Activated CD8-positive, alpha-beta T cell treated with anti-CD3 and anti-CD28 coated beads for 36 hours (primary cell): ENCODE measurements at regions of chrX and their contacts with region 1.

Region 1: DNA sequence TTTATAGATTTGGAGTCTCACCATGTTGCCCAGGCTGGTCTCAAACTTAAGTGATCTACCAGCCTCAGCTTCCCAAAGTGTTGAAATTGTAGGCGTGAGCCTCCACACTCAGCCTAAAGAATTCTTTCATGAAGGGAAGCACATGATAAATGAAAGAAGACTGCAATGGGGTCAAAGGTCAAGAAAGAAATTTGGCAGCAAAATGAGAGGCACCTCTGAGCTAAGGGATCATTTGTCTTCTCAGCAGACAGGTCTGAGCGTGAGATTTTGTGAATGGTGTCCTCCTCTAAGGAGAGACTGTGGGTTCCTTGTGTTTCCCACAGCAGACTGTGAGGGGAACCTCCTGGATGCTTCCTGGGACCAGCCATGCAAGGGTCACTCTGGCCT is 57.5 kb upstream of the EGFL6 start:
- DNase-seq: no peak
- ATAC-seq: no peak
- H3K4me3 Mint-ChIP-seq: no peak overlapping the region
- H3K27ac Mint-ChIP-seq: no peak overlapping the region
- H3K4me1 Mint-ChIP-seq: no peaks in the 10 kb centered on the region
- H3K27me3 Mint-ChIP-seq: no peaks in the 10 kb centered on the region
- CTCF ChIP-seq: no peak

Region 2: DNA sequence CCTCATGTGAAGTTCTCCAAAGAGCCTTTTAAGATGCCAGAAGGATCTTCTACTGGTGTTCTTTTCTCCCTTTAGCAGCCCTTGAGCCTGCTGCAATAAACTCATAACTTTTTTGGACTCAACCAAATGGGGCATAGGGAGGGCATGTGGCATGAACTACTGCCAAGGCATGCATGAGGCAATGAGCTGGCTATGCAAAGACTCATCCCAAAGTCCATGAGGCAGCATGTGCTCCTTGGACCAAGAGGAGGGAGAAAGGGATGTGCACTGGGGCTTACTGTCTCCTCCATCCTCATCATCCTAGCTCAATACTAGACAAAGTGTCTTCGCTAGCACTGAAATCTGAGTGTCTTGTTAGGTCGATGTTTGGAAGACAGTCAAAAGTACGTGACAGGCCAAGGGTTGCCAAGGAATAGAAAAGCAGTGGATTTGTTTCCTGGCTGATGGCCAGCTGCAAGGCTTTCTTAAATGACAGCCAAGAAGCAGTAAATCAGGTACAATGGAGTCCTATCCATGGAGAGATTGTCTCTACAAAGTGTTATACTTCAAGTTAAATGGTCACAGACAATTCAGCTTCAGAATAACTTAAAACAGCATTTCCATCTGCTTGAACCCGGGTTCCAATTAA is 147.6 kb before region 1 on chrX:
- CTCF ChIA-PET with region 1: no interaction called
- POLR2A ChIA-PET with region 1: no interaction called
- intact Hi-C with region 1: no loop called
- DNase-seq: no peak
- ATAC-seq: no peak
- H3K4me3 Mint-ChIP-seq: no peak overlapping the region
- H3K27ac Mint-ChIP-seq: no peak overlapping the region
- H3K4me1 Mint-ChIP-seq: peaks cover 7% of the 10 kb centered on the region
- H3K27me3 Mint-ChIP-seq: no peaks in the 10 kb centered on the region
- CTCF ChIP-seq: no peak

Region 3: DNA sequence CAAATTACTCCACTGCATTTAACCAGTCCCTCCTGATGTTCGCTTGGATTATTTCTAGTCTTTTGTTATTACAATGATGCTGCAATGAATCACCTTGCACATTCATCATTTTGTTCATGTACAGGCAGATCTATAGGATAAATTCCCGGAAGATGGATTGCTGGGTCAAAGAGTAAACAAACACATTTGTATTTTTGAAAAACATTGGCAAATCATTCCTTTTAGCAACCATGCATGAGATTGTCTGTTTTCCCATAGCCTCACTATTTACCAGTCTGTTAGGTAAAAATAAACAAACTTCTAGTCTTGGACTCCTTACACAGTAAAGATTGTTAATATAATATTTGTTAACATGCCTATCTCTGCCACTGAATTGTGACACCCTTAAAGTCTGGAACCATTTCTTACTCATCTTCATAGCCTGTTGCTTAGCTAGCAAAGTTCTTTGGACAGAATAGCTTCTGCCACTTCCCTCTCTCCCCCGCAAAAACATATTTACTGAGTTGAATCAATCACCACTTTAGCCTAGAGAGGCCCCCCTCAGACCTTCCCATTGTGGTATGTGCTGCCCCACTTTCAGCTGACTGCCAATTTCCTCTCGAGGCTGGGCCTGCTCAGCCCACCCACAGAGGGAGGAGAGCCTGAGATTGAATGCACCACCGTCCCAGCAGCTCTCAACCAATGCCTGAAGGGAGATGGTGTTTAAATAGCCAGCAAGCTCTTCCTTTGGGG is 83.7 kb before region 1 on chrX:
- CTCF ChIA-PET with region 1: no interaction called
- POLR2A ChIA-PET with region 1: no interaction called
- intact Hi-C with region 1: no loop called
- DNase-seq: peak; percentile 67
- ATAC-seq: peak; percentile 88
- H3K4me3 Mint-ChIP-seq: no peak overlapping the region
- H3K27ac Mint-ChIP-seq: peak overlapping the region; percentile 25
- H3K4me1 Mint-ChIP-seq: peaks cover 14% of the 10 kb centered on the region
- H3K27me3 Mint-ChIP-seq: no peaks in the 10 kb centered on the region
- CTCF ChIP-seq: no peak

Region 4: DNA sequence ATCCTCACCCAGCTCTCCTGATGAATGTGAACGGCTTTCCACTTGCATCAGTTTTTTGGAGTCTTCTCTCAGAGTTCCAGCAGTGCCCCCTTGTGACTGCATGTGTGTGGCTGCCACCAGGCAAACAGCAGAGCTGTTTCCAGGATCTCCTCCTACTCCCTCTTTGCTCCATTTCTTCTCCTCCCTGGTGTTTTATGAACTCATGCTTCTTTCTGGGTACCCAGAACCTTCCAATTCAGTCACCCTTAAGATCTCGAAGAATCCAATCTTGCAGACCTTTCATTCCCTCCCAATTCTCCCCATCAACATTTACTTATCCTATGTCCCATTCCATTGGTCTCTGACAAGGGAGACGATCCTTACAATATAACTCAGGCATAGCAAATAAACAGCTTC is 134.2 kb after region 1 on chrX:
- CTCF ChIA-PET with region 1: interaction called, 49 read pairs
- POLR2A ChIA-PET with region 1: no interaction called
- intact Hi-C with region 1: loop called (anchors 5 kb)
- DNase-seq: peak; percentile 71
- ATAC-seq: no peak
- H3K4me3 Mint-ChIP-seq: no peak overlapping the region
- H3K27ac Mint-ChIP-seq: peak overlapping the region; percentile 58
- H3K4me1 Mint-ChIP-seq: peaks cover 18% of the 10 kb centered on the region
- H3K27me3 Mint-ChIP-seq: no peaks in the 10 kb centered on the region
- CTCF ChIP-seq: peak; percentile 55